ENCODE measurements at regions of chr3 and their contacts with region 1.

Region 1: GRCh38 chr3:177190756-177191681 is 6.3 kb downstream of the TBL1XR1 start:
- DNase-seq: no peak
- ATAC-seq: no peak
- H3K4me3 ChIP-seq: no peak overlapping the region
- H3K27ac ChIP-seq: peak overlapping the region; percentile 36
- H3K4me1 ChIP-seq: peaks cover 40% of the 10 kb centered on the region
- H3K27me3 ChIP-seq: no peaks in the 10 kb centered on the region
- CTCF ChIP-seq: no peak

Region 2: DNA sequence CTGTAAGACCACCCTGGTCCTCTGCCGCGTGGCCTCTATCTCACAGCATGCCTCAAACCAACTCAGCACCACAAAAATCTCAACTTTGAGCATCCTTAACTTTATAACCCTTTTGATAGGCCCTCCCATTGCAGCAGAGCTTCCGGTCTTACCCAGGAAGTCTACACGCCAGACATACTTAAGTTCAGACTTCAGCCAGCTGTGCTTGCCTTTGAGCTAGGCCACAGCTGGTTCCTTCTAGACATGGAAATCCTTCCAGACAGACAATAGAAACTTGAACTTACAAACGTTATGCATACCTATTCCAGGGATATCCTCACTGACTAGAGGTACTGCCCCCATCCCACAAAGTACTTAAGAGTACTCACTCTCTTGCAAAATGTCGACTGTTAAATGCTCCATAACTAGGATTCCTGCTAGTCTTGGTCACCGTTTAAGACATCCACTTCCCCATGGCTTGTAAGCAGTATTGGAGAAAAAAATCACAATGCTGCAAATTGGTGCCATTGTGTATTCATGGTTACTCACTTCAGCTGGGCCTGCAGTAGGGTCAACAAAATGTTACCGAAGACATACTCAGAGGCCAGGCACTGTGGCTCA is 177.2 kb before region 1 on chr3:
- intact Hi-C with region 1: no loop called
- DNase-seq: no peak
- ATAC-seq: no peak
- H3K4me3 ChIP-seq: no peak overlapping the region
- H3K27ac ChIP-seq: no peak overlapping the region
- H3K4me1 ChIP-seq: no peaks in the 10 kb centered on the region
- H3K27me3 ChIP-seq: no peaks in the 10 kb centered on the region
- CTCF ChIP-seq: no peak

Region 3: DNA sequence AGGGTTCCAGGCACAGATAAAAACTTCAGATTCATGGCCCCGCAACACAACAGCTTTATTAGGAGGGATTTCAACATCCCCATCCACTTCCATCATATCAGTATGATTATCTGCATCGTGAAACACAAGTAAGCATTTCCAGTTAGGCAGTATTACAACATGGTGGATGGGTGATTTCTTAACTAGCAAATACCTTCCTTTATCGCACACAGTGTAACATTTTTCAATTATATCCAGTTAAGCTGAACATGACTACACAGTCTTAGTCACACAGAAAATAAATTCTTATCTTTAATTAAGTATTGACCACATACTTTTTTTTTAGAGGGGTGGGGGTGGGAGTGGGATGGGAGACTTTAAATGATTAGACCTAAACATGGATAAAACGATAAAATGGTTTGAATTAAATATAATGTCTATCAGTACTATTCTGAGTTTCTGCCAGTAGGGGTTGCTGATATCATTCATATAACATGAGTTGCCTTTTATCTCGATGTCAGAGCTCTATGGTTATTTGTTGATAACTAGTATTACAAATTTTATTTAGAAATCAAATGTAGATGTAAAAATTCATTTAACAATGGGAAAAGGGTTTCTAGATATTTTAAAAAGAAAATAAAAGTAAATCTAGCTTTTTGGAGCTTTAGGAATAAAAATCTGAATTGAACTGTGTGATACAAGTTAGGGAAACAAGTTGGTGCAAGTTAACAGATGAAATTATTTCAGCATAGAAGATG is 140.3 kb before region 1 on chr3:
- intact Hi-C with region 1: loop called (anchors 5 kb)
- DNase-seq: no peak
- ATAC-seq: peak; percentile 57 to 83 (median 68)
- H3K4me3 ChIP-seq: no peak overlapping the region
- H3K27ac ChIP-seq: no peak overlapping the region
- H3K4me1 ChIP-seq: peaks cover 5% of the 10 kb centered on the region
- H3K27me3 ChIP-seq: no peaks in the 10 kb centered on the region
- CTCF ChIP-seq: peak; percentile 65

Region 4: GRCh38 chr3:177069514-177070329 is 121.3 kb before region 1 on chr3:
- intact Hi-C with region 1: loop called in 1 of 2 experiments (anchors 5 kb)
- DNase-seq: no peak
- ATAC-seq: no peak
- H3K4me3 ChIP-seq: no peak overlapping the region
- H3K27ac ChIP-seq: no peak overlapping the region
- H3K4me1 ChIP-seq: peaks cover 64% of the 10 kb centered on the region
- H3K27me3 ChIP-seq: no peaks in the 10 kb centered on the region
- CTCF ChIP-seq: no peak

Region 5: GRCh38 chr3:177126015-177126773 is 64.8 kb before region 1 on chr3:
- intact Hi-C with region 1: loop called (anchors 5 to 10 kb)
- DNase-seq: no peak
- ATAC-seq: peak; percentile 64 to 81 (median 70)
- H3K4me3 ChIP-seq: no peak overlapping the region
- H3K27ac ChIP-seq: peak overlapping the region; percentile 23
- H3K4me1 ChIP-seq: peaks cover 64% of the 10 kb centered on the region
- H3K27me3 ChIP-seq: no peaks in the 10 kb centered on the region
- CTCF ChIP-seq: no peak